ENCODE measurements at regions of chr3 and their contacts with region 1.

Region 1: GRCh38 chr3:16600780-16601539 is 4.3 kb downstream of the DAZL start:
- DNase-seq: peak; percentile 86
- H3K4me3 ChIP-seq: no peak overlapping the region
- H3K27ac ChIP-seq: no peak overlapping the region
- H3K4me1 ChIP-seq: no peaks in the 10 kb centered on the region
- H3K27me3 ChIP-seq: no peaks in the 10 kb centered on the region

Region 2: DNA sequence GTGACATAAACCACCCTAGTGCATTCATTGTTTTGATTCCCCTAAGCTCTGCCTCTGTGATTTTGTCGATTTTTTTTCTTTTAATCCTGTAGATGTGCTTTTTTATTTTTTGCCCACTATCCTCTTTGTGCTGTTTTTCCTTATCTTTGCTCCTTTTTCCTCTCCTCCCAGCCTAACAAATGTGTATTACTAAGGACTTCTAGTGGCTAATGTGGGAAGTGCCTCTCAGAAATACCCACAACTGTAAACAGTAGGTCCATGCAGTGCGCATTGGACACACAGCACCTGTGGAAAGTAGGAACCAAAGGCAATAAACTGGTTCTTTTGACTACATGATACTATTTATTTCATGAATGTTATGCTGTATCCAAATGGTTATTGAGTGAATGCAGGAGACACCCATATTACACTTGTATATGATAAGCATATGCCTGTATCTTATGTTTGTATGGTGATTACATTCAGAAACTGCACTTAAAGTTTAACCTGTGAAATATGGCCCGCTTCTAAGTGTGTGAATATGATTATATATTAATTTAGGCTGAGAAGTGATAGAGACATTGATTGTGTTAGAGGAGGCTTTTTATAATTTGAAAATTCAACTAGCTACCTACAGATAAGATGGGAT is 431.6 kb after region 1 on chr3:
- in situ Hi-C with region 1: loop called (anchors 10 kb)
- DNase-seq: peak; percentile 52
- H3K4me3 ChIP-seq: no peak overlapping the region
- H3K27ac ChIP-seq: no peak overlapping the region
- H3K4me1 ChIP-seq: peaks cover 18% of the 10 kb centered on the region
- H3K27me3 ChIP-seq: no peaks in the 10 kb centered on the region

Region 3: DNA sequence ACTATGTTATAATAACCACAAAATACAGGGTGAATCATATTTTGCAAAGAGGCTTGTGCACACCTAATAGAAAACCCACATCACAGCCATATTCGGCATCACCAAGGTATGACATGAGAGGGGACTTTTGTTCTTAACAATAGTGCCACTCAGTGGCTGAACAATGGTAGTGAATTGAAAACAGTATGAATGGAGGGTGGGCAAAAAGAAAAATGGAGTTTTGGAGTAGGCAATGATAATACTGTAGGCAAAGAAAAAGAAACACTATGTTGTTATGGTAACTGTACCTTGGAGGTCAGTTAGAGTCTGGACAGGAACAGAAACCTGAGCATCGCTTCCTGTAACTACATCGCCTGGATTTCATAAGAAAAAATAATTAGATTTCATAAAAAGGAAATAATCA is 632.4 kb after region 1 on chr3:
- in situ Hi-C with region 1: loop called (anchors 10 kb)
- DNase-seq: peak; percentile 81
- H3K4me3 ChIP-seq: no peak overlapping the region
- H3K27ac ChIP-seq: no peak overlapping the region
- H3K4me1 ChIP-seq: 0 out of 2 replicates have a peak, but pooled peaks cover 3% of the 10 kb centered on the region
- H3K27me3 ChIP-seq: no peaks in the 10 kb centered on the region